Mammary epithelial cell (primary cell): ENCODE measurements at regions of chr3 and their contacts with region 1.

Region 1: DNA sequence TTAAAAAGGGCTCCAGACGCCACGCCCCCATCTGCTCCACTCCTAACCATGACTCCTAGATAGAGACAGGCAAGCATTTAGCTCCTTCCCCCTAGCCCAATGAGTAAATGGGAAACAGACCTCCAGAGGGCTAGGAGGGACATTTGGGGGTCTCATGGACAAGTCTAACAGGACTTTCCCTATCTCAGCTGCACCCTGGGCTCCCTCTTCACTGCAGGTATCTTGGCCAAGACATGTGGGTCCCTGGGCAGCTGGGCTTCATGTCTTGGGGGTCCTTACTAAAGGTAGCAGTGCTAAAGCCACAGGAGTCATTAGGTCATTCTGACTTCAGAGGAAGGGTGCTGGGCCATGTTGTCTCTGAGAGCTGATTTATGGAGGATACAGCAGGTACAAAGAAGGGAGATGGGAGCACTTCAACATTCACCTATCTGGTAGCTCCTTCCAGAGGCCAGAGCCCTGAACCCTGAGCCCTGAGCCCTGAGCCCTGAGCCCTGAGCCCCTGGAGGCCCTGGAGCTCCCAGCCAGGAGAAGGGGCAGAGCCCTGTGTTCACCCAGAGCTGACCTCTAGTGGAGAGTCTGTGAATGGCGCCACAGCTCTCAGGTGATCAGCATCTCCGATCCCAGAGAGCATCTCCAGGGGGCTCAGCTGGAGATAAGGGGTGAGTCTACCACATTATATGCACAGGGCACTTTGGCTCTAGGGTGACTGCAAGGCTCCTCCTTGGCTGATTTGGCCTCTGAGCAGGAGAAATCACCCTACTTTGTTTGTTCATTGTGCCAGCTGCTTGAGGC is 40.1 kb upstream of the EPHB1 start:
- DNase-seq: peak; percentile 40
- H3K4me3 ChIP-seq: no peak overlapping the region
- H3K27ac ChIP-seq: no peak overlapping the region
- H3K4me1 ChIP-seq: no peaks in the 10 kb centered on the region
- H3K27me3 ChIP-seq: no peaks in the 10 kb centered on the region
- CTCF ChIP-seq: peak; percentile 80 to 87

Region 2: GRCh38 chr3:134630506-134630905 is 124.5 kb before region 1 on chr3:
- CTCF ChIA-PET with region 1: interaction called, 3 read pairs
- dilution Hi-C with region 1: no loop called
- in situ Hi-C with region 1: no loop called
- intact Hi-C with region 1: loop called (anchors 1 kb)
- DNase-seq: no peak
- H3K4me3 ChIP-seq: no peak overlapping the region
- H3K27ac ChIP-seq: no peak overlapping the region
- H3K4me1 ChIP-seq: no peaks in the 10 kb centered on the region
- H3K27me3 ChIP-seq: no peaks in the 10 kb centered on the region
- CTCF ChIP-seq: peak; percentile 68 to 69

Region 3: DNA sequence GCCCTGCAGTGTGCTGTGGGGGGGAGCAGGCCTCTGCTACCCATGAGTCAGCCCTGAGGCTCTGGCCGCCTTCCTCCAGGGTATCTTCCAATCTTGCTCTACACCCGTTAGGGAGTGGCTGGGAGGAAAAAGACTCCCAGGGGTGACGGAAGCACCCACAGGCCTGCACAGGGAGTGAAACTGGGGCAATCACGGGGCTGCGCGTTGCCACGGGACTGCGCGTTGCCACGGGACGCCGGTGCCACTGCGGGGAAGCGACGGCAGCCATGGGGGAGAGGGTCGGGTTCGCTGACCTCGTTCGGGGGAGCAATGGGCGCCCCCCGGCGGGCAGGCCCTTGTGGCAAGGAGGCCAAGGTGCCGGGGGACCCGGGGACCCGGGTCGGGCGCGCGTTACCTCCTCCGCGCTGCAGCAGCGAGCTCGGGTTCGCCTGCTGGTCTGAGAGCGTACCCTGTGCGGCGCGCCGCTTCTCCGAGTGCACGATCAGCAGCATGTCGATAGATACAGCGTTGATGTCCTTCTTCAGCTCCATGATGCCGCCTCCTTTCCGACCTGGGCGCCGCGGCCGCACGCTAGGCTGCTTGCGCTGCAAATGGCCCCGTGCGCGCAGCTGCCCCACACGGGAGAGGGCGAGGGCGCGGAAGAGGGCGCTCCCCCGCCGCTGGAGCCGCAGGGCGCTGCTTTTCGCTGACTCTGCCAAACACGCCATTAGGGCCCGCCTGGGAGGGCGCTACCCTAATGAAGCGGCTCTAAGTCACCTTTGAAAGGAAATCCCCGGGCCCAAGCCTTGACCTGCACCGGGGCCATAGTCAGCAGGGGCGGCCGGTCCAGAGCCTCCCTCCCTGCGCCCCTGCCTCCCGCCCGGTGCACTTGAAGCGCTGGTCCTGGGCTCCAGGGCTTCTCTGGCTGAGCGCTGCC is 104.3 kb before region 1 on chr3 and contains the start of gene KY:
- CTCF ChIA-PET with region 1: no interaction called
- dilution Hi-C with region 1: no loop called
- in situ Hi-C with region 1: no loop called
- intact Hi-C with region 1: loop called (anchors 1 kb)
- DNase-seq: peak; percentile 22
- H3K4me3 ChIP-seq: peak within 1 kb of the TSS; percentile 11 to 47 (median 45)
- H3K27ac ChIP-seq: no peak within 1 kb of the TSS
- H3K4me1 ChIP-seq: peaks cover 12% of the 10 kb centered on the region
- H3K27me3 ChIP-seq: peaks cover 5% of the 10 kb centered on the region
- CTCF ChIP-seq: peak in 1 of 2 donors; percentile 37
- total RNA-seq, gene KY: 0.33 TPM in 1 of 2 donors, not detected in the other

Region 4: GRCh38 chr3:134709561-134710312 is 45.2 kb before region 1 on chr3:
- CTCF ChIA-PET with region 1: no interaction called
- dilution Hi-C with region 1: no loop called
- in situ Hi-C with region 1: no loop called
- intact Hi-C with region 1: no loop called
- DNase-seq: no peak
- H3K4me3 ChIP-seq: no peak overlapping the region
- H3K27ac ChIP-seq: no peak overlapping the region
- H3K4me1 ChIP-seq: no peaks in the 10 kb centered on the region
- H3K27me3 ChIP-seq: no peaks in the 10 kb centered on the region
- CTCF ChIP-seq: no peak

Region 5: DNA sequence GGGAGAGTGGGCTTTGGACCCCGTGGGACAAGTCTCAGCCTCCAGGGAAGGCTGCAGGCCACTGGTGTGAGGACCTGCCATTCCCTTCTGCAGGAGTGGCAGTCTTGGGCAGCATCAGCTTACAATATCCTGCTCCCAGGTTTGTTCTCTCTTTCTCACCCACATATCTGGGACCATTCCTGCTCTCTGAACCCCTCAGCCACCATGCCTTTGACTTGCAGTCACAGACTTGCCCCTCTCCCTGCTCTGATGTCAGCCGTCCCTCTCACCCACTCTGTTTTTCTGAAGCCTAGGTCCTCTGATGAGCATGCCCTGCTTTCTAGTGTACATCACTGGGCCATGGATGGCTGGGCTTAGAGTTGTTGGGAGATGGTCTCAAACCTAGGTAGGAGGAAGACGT is 322.2 kb after region 1 on chr3:
- CTCF ChIA-PET with region 1: no interaction called
- dilution Hi-C with region 1: no loop called
- in situ Hi-C with region 1: no loop called
- intact Hi-C with region 1: no loop called
- DNase-seq: no peak
- H3K4me3 ChIP-seq: no peak overlapping the region
- H3K27ac ChIP-seq: no peak overlapping the region
- H3K4me1 ChIP-seq: no peaks in the 10 kb centered on the region
- H3K27me3 ChIP-seq: no peaks in the 10 kb centered on the region
- CTCF ChIP-seq: no peak